OCI-LY7 (cell line): ENCODE measurements at regions of chr1 and their contacts with region 1.

Region 1: GRCh38 chr1:111603979-111604378 is 15.6 kb upstream of the RAP1A start:
- DNase-seq: peak; percentile 77
- H3K4me3 ChIP-seq: no peak overlapping the region
- H3K27ac ChIP-seq: peak overlapping the region; percentile 75
- H3K4me1 ChIP-seq: peaks cover 64% of the 10 kb centered on the region
- CTCF ChIP-seq: no peak

Region 2: DNA sequence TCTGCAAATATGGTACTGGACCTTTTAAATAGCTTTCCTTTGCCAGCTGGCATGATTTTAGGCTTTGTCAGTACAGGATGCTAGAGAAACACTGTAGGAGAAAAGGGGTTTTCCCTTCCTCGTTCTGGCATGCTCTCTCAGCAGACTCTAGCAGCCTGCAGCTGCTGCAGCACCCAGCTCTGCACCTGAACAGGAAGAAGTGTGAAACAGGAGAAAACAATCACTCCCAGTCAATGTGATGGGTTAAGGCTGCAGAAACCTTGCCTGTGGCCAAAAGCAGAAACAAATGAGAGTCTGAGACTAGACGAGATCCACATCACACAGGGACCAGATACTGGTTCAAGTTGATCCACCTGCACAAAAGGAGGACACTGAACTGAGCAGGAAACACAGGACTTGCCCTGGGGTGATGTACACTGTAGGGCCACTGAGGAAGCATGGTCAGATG is 197.6 kb before region 1 on chr1:
- CTCF ChIA-PET with region 1: no interaction called
- POLR2A ChIA-PET with region 1: no interaction called
- intact Hi-C with region 1: loop called (anchors 5 kb)
- DNase-seq: peak; percentile 97
- H3K4me3 ChIP-seq: peak overlapping the region; percentile 46
- H3K27ac ChIP-seq: peak overlapping the region; percentile 94
- H3K4me1 ChIP-seq: peaks cover 61% of the 10 kb centered on the region
- CTCF ChIP-seq: no peak

Region 3: GRCh38 chr1:111587509-111588174 is 16.3 kb before region 1 on chr1:
- CTCF ChIA-PET with region 1: interaction called, 3 read pairs
- POLR2A ChIA-PET with region 1: interaction called, 43 read pairs
- intact Hi-C with region 1: no loop called
- DNase-seq: no peak
- H3K4me3 ChIP-seq: no peak overlapping the region
- H3K27ac ChIP-seq: no peak overlapping the region
- H3K4me1 ChIP-seq: peaks cover 17% of the 10 kb centered on the region
- CTCF ChIP-seq: no peak

Region 4: GRCh38 chr1:111592389-111593361 is 11.3 kb before region 1 on chr1:
- CTCF ChIA-PET with region 1: interaction called, 3 read pairs
- POLR2A ChIA-PET with region 1: interaction called, 43 read pairs
- intact Hi-C with region 1: no loop called
- DNase-seq: peak; percentile 65
- H3K4me3 ChIP-seq: peak overlapping the region; percentile 25
- H3K27ac ChIP-seq: no peak overlapping the region
- H3K4me1 ChIP-seq: peaks cover 45% of the 10 kb centered on the region
- CTCF ChIP-seq: no peak

Region 5: GRCh38 chr1:111619635-111620440 is 15.9 kb after region 1 on chr1 and contains the start of gene RAP1A:
- CTCF ChIA-PET with region 1: interaction called, 5 read pairs
- POLR2A ChIA-PET with region 1: interaction called, 93 read pairs
- intact Hi-C with region 1: loop called (anchors 1 kb)
- DNase-seq: peak; percentile 92
- H3K4me3 ChIP-seq: peak within 1 kb of the TSS; percentile 94
- H3K27ac ChIP-seq: peak within 1 kb of the TSS; percentile 53
- H3K4me1 ChIP-seq: peaks cover 79% of the 10 kb centered on the region
- CTCF ChIP-seq: no peak
- total RNA-seq, gene RAP1A: 8.5 and 10.4 TPM in 2 replicates